ENCODE measurements at regions of chr10 and their contacts with region 1.

Region 1: GRCh38 chr10:100598166-100598565 is 62.4 kb downstream of the HIF1AN start:
- DNase-seq: no peak
- H3K4me3 ChIP-seq: no peak overlapping the region
- H3K27ac ChIP-seq: no peak overlapping the region
- H3K27me3 ChIP-seq: peaks cover 6% of the 10 kb centered on the region
- CTCF ChIP-seq: no peak

Region 2: GRCh38 chr10:100303724-100304319 is 294.3 kb before region 1 on chr10:
- CTCF ChIA-PET with region 1: interaction called, 10 read pairs
- POLR2A ChIA-PET with region 1: no interaction called
- DNase-seq: no peak
- H3K4me3 ChIP-seq: no peak overlapping the region
- H3K27ac ChIP-seq: no peak overlapping the region
- H3K27me3 ChIP-seq: peaks cover 15% of the 10 kb centered on the region
- CTCF ChIP-seq: peak; percentile 74

Region 3: DNA sequence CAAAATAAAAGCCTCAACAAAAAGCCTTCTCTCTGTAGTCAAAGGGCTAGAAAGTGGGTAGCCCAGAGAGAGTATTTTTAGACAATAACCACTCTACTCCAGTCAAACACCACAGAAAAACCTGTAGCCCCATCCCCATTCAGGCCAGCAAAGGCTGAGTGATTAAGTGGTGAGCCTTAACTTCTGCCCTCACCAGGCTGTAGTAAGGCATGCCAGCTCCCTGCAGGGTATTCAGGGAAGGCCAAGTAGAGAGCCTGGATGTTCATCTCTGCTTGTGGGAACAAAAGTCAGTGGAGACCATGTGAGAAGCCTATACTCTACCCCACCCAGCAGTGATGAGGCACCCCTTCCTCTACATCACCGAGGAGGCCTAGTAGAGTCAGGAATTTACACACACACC is 11.2 kb before region 1 on chr10:
- CTCF ChIA-PET with region 1: no interaction called
- POLR2A ChIA-PET with region 1: no interaction called
- DNase-seq: no peak
- H3K4me3 ChIP-seq: no peak overlapping the region
- H3K27ac ChIP-seq: no peak overlapping the region
- H3K27me3 ChIP-seq: peaks cover 21% of the 10 kb centered on the region
- CTCF ChIP-seq: no peak

Region 4: DNA sequence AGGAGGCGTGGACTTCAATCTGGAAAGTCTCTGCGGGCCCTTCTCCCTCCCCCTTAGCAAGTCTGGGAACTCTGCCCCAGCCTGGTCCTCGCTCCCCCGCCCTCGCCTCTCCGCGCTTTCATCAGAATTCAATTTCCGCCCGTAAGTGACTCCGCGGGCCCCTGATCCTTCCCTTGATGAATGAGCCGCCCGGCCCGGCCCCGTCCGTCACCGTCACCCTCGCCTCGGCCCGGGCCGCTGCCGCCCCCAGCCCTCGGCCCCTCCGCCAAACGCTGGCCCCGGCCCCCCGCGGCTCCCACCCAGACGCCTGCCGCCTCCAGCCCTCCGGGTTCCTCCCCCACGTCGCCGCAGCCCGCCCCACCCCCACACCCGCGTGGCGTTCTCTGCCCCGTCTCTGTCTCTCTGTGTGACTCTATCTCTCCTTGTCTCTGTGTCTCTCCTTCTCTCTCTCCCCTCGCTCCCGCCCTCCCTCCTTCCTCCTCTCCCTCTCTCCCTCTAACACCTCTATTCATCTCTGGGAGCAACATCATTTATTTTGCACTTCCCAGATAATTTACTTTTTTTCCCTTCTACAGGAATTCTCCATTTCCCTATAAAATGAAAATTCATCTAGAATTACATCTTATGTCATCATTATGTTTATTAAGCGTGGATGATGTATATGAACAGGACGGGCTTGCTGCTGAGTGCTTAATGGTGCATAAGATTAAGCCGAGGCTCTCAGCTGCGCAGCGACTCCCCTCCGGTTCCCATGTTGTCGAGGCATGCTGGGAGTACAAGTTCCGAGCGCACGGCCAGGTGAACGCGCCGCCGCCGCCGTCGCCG is 56.0 kb after region 1 on chr10:
- CTCF ChIA-PET with region 1: no interaction called
- POLR2A ChIA-PET with region 1: no interaction called
- DNase-seq: no peak
- H3K4me3 ChIP-seq: no peak overlapping the region
- H3K27ac ChIP-seq: no peak overlapping the region
- H3K27me3 ChIP-seq: peaks cover 60% of the 10 kb centered on the region
- CTCF ChIP-seq: no peak